Sigmoid colon (tissue), 7 donors: ENCODE measurements at regions of chr15 and their contacts with region 1.

Region 1: DNA sequence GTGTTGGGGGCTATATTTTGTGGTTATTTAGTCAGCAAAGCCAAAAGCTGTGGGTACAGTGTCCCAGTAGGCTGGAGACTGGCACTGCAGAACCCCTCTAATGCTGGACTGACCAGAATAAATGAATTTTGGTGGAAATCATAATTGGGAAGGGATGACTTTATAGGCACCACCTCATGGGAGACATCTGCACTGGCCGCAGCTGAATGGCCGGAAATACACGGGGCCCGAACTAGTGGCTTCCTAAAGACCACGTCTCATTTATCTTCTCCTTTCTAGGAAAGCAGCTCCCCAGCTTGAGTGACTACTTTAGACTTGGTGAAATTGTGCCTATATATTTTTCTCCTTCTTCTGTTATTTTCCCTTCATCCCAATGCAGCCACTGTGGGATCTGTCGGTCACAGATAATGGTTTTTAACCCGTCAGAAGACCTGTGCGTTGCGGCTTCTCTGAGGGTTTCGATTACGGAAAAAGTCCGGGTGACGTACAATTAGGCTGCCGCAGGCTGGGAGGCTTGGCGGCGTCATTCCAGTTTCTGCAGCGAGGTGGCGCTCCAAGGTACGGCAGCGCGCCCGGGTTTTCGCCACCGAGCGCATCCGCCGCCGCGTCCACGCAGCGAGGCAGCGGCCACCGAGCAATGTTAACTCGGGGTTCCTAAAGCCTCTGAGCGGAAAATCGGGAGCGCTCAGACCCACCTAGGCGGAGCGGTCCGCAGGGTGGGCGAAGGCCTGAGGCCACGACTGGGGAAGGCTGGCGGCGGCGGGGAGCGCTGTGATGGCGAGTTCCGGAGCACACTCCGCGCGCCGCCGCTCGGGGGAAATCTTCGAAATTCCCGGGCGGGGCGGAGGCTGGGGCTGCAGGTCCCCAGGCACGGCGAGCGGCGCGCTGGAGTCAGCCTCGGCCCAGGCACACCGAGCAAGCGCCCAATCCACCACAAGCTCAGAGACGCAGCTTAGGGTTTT is 26.3 kb downstream of the NR2F2 start:
- DNase-seq: peak; percentile 89
- H3K4me3 ChIP-seq: peak overlapping the region; percentile 51 to 65 (median 59)
- H3K27ac ChIP-seq: peak overlapping the region; percentile 71 to 92 (median 80)
- H3K4me1 ChIP-seq: peaks cover 0 to 44% (median 36%) of the 10 kb centered on the region in 4 donors
- H3K27me3 ChIP-seq: peaks cover 24 to 42% (median 31%) of the 10 kb centered on the region in 3 donors
- CTCF ChIP-seq: peak; percentile 91 to 99 (median 96)
- EP300 ChIP-seq: no peak
- POLR2A ChIP-seq: no peak

Region 2: GRCh38 chr15:95972041-95972553 is 384.7 kb before region 1 on chr15:
- intact Hi-C with region 1: no loop called
- DNase-seq: no peak
- H3K4me3 ChIP-seq: no peak overlapping the region
- H3K27ac ChIP-seq: no peak overlapping the region
- H3K4me1 ChIP-seq: no peaks in the 10 kb centered on the region
- H3K27me3 ChIP-seq: no peaks in the 10 kb centered on the region
- CTCF ChIP-seq: no peak
- EP300 ChIP-seq: no peak
- POLR2A ChIP-seq: no peak

Region 3: GRCh38 chr15:96403071-96403470 is 46.3 kb after region 1 on chr15:
- intact Hi-C with region 1: no loop called
- DNase-seq: no peak
- H3K4me3 ChIP-seq: no peak overlapping the region
- H3K27ac ChIP-seq: no peak overlapping the region
- H3K4me1 ChIP-seq: no peaks in the 10 kb centered on the region
- H3K27me3 ChIP-seq: peaks cover 2 to 37% (median 19%) of the 10 kb centered on the region in 3 donors
- CTCF ChIP-seq: no peak
- EP300 ChIP-seq: no peak
- POLR2A ChIP-seq: no peak

Region 4: GRCh38 chr15:96416934-96417759 is 60.4 kb after region 1 on chr15:
- intact Hi-C with region 1: loop called (anchors 5 kb)
- DNase-seq: no peak
- H3K4me3 ChIP-seq: peak overlapping the region in 2 of 4 donors; percentile 13 to 30
- H3K27ac ChIP-seq: no peak overlapping the region
- H3K4me1 ChIP-seq: peaks cover 0 to 20% (median 18%) of the 10 kb centered on the region in 4 donors
- H3K27me3 ChIP-seq: peaks cover 45 to 100% (median 92%) of the 10 kb centered on the region in 3 donors
- CTCF ChIP-seq: no peak
- EP300 ChIP-seq: no peak
- POLR2A ChIP-seq: no peak

Region 5: GRCh38 chr15:96893159-96893906 is 536.6 kb after region 1 on chr15:
- intact Hi-C with region 1: loop called (anchors 5 kb)
- DNase-seq: no peak
- H3K4me3 ChIP-seq: no peak overlapping the region
- H3K27ac ChIP-seq: no peak overlapping the region
- H3K4me1 ChIP-seq: peaks cover 0 to 7% (median 0%) of the 10 kb centered on the region in 4 donors
- H3K27me3 ChIP-seq: no peaks in the 10 kb centered on the region
- CTCF ChIP-seq: peak in 3 of 4 experiments; percentile 23 to 51 (median 25)
- EP300 ChIP-seq: no peak
- POLR2A ChIP-seq: no peak